SK-N-SH (cell line): ENCODE measurements at regions of chr6 and their contacts with region 1.

Region 1: GRCh38 chr6:136792410-136793262 is at the start of gene MAP3K5:
- DNase-seq: peak; percentile 85
- H3K4me3 ChIP-seq: peak within 1 kb of the TSS; percentile 74 to 81
- H3K27ac ChIP-seq: peak within 1 kb of the TSS; percentile 70 to 92
- H3K4me1 ChIP-seq: peaks cover 2 to 6% of the 10 kb centered on the region in 2 experiments; a peak in 2 of 4 replicates
- H3K27me3 ChIP-seq: no peaks in the 10 kb centered on the region
- CTCF ChIP-seq: peak; percentile 75
- EP300 ChIP-seq: no peak
- RAD21 ChIP-seq: peak; percentile 87
- polyA plus RNA-seq, gene MAP3K5: 1.4 TPM in 2 replicates

Region 2: DNA sequence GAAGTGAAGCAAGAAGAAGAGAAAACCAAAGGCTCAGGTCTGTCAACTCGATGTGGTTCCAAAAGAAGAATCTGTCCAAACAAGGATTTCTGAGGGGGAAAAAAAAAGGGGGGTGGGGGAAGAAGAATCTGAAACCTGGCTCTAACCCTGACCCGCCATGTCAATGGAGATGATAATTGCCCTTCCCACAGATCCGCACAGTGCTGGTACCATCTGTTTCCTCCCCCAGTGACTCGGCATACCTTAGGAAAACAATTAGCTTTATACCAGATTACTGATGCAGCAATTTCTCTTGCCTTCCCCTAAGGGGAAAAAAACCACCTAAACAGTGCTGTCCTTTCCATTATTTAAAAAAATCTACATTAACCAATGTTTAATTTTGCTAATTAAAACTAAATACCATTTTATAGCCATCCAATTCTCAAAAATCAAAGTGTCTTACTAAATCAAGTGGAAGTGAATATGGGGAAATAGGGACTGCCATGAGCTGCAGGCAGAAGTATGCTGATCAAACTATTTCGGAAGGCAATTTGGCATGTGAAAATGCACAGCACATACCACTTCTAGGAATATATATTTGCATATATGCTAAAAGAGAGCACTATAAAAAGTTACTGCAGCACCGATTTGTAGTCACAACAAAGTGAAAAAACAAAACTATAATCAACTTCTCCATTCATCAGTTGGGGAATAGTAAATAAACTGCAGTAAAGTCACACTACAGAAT is 289.2 kb before region 1 on chr6:
- CTCF ChIA-PET with region 1: no interaction called
- POLR2A ChIA-PET with region 1: no interaction called
- DNase-seq: no peak
- H3K4me3 ChIP-seq: no peak overlapping the region
- H3K27ac ChIP-seq: peak overlapping the region in 1 of 2 experiments; percentile 51; a peak in 2 of 4 replicates
- H3K4me1 ChIP-seq: peaks cover 0 to 20% of the 10 kb centered on the region in 2 experiments; a peak in 2 of 4 replicates
- H3K27me3 ChIP-seq: no peaks in the 10 kb centered on the region
- CTCF ChIP-seq: no peak
- EP300 ChIP-seq: no peak
- RAD21 ChIP-seq: no peak

Region 3: DNA sequence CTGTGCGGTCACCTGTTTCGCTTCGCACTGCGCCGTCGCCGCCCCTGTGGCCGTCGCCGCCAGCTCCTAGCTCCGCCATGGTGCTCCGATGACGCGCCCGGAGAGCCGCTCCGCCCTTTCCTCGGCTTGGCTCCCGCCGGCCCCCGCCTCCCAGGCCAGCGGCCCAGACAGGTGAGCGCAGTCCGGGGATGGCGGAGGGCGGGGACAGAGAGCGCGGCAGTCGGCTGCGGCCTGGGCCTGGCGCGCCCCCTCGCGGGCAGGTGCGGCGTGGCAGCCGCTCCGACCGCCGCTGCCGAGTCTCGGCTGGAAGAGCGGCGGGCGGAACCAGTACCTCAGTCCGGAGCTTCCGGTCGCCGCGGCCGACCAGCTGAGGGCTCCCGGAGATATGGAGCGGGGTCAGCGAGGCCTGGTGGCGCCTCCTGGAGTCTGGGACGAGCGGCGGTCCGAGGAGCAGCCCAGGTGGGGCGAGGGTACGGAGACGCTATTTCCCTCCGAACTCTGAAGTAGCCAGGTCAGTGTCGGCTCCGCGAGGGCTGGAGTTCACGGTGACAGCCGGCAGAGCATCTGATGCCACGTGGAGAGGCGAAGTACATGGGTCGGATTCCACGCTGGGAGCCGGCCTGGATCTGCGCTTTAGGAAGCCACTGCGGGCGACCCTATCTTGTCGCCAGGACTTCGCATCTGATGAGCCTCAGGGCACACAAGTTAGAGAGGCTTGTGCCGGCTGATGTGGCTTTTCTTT is 242.1 kb before region 1 on chr6 and contains the start of gene MAP7:
- CTCF ChIA-PET with region 1: interaction called, 10 read pairs
- POLR2A ChIA-PET with region 1: no interaction called
- DNase-seq: peak; percentile 88
- H3K4me3 ChIP-seq: peak within 1 kb of the TSS; percentile 70 to 77
- H3K27ac ChIP-seq: peak within 1 kb of the TSS in 1 of 2 experiments; percentile 55; a peak in 2 of 4 replicates
- H3K4me1 ChIP-seq: peaks cover 0 to 16% of the 10 kb centered on the region in 2 experiments; a peak in 2 of 4 replicates
- H3K27me3 ChIP-seq: peaks cover 12% of the 10 kb centered on the region; the same call in 1 of the 2 replicates
- CTCF ChIP-seq: peak; percentile 69
- EP300 ChIP-seq: no peak
- RAD21 ChIP-seq: peak; percentile 54
- polyA plus RNA-seq, gene MAP7: 0.76 and 0.97 TPM in 2 replicates

Region 4: GRCh38 chr6:136607932-136608772 is 184.5 kb before region 1 on chr6:
- CTCF ChIA-PET with region 1: interaction called, 36 read pairs
- POLR2A ChIA-PET with region 1: no interaction called
- DNase-seq: peak; percentile 35
- H3K4me3 ChIP-seq: peak overlapping the region in 1 of 2 experiments; percentile 13; a peak in 1 of 4 replicates
- H3K27ac ChIP-seq: peak overlapping the region in 1 of 2 experiments; percentile 98; a peak in 2 of 4 replicates
- H3K4me1 ChIP-seq: peaks cover 4 to 34% of the 10 kb centered on the region in 2 experiments; a peak in 3 of 4 replicates
- H3K27me3 ChIP-seq: no peaks in the 10 kb centered on the region
- CTCF ChIP-seq: peak; percentile 76
- EP300 ChIP-seq: no peak
- RAD21 ChIP-seq: peak; percentile 59

Region 5: DNA sequence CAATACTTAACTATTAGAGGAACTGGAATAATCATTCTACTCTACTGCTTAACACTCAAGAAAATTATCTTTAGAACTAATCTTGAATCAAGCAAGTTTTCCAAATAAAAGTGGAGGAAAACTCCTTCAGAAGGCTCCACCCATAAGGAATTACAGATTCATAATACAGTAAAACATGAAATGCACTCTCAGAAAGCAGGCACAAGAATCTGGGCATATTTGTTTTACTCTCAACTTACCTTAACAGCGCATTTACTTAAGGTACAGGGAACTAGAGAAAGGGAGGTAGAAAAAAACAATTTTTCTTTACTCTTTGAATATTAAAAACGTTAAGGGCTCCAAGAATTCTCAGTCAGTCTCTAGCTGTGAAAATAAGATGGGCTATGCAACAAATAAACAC is 140.7 kb before region 1 on chr6:
- CTCF ChIA-PET with region 1: interaction called, 20 read pairs
- POLR2A ChIA-PET with region 1: interaction called, 4 read pairs
- DNase-seq: no peak
- H3K4me3 ChIP-seq: no peak overlapping the region
- H3K27ac ChIP-seq: no peak overlapping the region
- H3K4me1 ChIP-seq: no peaks in the 10 kb centered on the region
- H3K27me3 ChIP-seq: no peaks in the 10 kb centered on the region
- CTCF ChIP-seq: no peak
- EP300 ChIP-seq: no peak
- RAD21 ChIP-seq: no peak

Region 6: GRCh38 chr6:136719280-136720044 is 73.2 kb before region 1 on chr6:
- CTCF ChIA-PET with region 1: interaction called, 12 read pairs
- POLR2A ChIA-PET with region 1: interaction called, 5 read pairs
- DNase-seq: no peak
- H3K4me3 ChIP-seq: no peak overlapping the region
- H3K27ac ChIP-seq: no peak overlapping the region
- H3K4me1 ChIP-seq: peaks cover 0 to 6% of the 10 kb centered on the region in 2 experiments; a peak in 1 of 4 replicates
- H3K27me3 ChIP-seq: no peaks in the 10 kb centered on the region
- CTCF ChIP-seq: no peak
- EP300 ChIP-seq: no peak
- RAD21 ChIP-seq: no peak

Region 7: DNA sequence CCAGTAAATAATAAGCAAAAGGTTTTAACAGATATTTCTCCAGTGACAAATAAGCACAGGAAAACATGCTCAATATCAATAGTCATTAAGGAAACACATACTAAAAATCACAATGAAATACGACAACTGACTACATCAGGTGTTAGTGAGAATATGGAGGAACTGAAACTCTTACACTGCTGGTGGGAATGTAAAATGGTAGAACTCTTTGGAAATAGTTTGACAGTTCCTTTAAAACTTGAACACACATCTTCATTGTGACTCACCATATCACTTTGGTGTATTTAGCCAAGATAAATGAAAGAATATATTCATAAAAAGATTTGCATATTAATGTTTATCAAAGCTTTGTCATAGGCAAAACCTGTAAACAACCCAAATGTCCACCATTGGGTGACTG is 11.0 kb after region 1 on chr6:
- CTCF ChIA-PET with region 1: interaction called, 19 read pairs
- POLR2A ChIA-PET with region 1: no interaction called
- DNase-seq: no peak
- H3K4me3 ChIP-seq: no peak overlapping the region
- H3K27ac ChIP-seq: no peak overlapping the region
- H3K4me1 ChIP-seq: no peaks in the 10 kb centered on the region
- H3K27me3 ChIP-seq: no peaks in the 10 kb centered on the region
- CTCF ChIP-seq: no peak
- EP300 ChIP-seq: no peak
- RAD21 ChIP-seq: no peak